AG04449 (cell line): ENCODE measurements at regions of chr15 and their contacts with region 1.

Region 1: DNA sequence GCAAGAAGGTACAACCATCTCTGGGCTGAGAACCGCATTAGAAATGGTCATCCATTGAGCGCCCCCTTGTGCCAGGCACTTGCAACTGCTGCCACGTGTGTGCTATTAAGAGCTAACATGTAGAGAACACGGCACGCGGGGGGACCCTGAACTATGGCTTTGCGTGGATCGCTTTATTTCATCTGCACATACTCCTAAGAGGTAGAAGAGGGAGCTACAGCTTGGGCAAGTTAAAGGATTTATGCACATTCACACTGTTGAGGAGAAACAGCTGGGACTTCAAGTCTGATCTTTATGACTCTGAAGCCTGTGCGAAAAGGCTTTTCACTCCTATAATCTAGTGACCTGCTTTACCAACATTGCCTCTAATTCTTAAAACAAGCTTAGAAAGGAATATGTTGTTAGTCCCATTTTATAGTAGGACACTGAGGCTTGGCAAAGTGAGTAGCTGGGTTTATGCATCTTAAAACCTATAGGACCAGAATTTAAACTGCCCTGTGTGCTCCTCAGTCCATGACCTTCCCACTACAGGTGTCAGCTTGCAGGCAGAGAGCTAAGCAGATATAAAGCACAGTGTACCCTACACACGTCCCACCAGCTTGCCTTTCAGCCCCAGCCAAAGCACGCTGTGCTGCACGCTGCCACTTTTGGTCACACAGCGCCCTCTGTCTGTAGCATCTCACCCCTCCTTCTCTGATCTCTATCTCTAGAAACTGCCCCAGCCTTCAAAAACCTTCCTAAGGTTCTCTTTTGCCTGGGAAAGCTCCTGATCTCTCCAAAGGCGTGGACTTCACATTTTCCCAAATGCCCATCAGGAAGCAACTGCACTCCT is 57.8 kb downstream of the STARD5 start:
- DNase-seq: no peak
- H3K4me3 ChIP-seq: peak overlapping the region; percentile 23
- CTCF ChIP-seq: peak; percentile 89

Region 2: DNA sequence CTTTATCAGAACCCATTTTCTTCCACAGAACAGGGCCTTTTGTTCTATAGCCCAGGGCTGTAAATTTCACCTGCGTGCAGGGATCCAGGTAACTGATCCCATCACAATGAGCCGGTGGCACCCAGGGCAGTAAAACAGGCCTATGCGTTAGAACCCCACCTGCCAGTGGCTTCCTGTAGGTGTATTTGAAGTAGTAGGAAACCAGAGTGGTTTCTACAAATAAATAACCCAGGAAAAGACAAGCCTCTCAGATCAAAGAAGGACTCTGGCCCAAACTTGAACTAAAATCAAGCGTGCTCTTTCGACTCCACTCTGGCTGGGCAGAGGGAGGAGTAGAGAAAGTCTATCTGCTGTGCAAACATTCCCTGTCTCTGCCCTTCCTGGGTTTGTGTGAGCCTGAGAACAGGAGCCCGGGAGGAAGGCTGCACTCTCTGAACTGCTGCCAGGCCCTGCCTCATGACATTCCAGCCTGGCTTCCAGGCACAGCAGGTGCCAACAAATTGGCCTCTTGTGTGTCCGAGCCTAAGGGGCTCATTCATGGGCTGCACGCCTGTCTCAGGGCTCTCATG is 409.3 kb before region 1 on chr15:
- CTCF ChIA-PET with region 1: no interaction called
- POLR2A ChIA-PET with region 1: no interaction called
- DNase-seq: no peak
- H3K4me3 ChIP-seq: no peak overlapping the region
- CTCF ChIP-seq: no peak

Region 3: DNA sequence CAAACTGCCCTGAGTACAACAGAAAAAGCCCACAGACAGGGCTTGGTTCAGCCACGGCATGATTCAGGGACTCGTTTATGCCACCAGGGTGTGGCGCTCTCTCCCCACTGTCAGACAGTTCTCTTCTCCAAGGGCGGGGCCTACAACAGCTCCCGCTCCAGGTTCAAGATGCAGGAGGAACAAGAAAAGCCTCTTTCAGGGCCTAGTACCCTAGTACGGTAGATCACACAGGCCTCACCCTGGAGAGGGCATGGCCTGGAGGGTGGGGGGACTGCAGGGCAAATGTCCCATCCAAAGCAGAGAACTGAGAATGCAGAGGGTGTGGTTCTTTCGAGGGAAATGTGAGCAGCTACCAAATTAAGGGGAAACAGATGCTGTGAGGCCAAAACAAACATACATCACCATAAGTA is 288.5 kb before region 1 on chr15:
- CTCF ChIA-PET with region 1: interaction called, 142 read pairs
- POLR2A ChIA-PET with region 1: no interaction called
- DNase-seq: no peak
- H3K4me3 ChIP-seq: no peak overlapping the region
- CTCF ChIP-seq: peak; percentile 62

Region 4: GRCh38 chr15:81049835-81050234 is 216.3 kb before region 1 on chr15:
- CTCF ChIA-PET with region 1: interaction called, 13 read pairs
- POLR2A ChIA-PET with region 1: no interaction called
- DNase-seq: no peak
- H3K4me3 ChIP-seq: no peak overlapping the region
- CTCF ChIP-seq: no peak

Region 5: GRCh38 chr15:81073801-81074200 is 192.4 kb before region 1 on chr15:
- CTCF ChIA-PET with region 1: no interaction called
- POLR2A ChIA-PET with region 1: no interaction called
- DNase-seq: no peak
- H3K4me3 ChIP-seq: no peak overlapping the region
- CTCF ChIP-seq: no peak

Region 6: GRCh38 chr15:81155375-81156218 is 110.6 kb before region 1 on chr15:
- CTCF ChIA-PET with region 1: interaction called, 733 read pairs
- POLR2A ChIA-PET with region 1: interaction called, 7 read pairs
- DNase-seq: no peak
- H3K4me3 ChIP-seq: no peak overlapping the region
- CTCF ChIP-seq: peak; percentile 31

Region 7: DNA sequence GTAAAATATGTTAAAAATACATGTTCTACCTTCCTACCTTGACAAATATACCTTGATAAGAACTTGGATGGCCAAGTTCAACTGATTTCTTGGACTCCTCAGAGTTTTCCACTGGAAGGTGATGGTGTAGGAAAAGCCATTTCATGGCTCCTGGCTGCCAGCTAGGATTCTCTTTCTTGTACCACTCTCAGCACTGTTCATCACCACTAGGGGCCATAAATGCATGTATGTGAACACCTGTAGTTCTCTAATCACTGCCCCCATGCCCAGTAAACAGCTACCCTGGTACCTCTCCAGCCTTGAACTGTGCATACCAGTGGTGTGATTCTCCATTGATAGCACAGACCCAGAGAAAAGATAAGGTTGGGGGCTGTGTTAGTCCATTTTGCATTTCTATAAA is 31.3 kb before region 1 on chr15:
- CTCF ChIA-PET with region 1: interaction called, 26 read pairs
- POLR2A ChIA-PET with region 1: no interaction called
- DNase-seq: no peak
- H3K4me3 ChIP-seq: no peak overlapping the region
- CTCF ChIP-seq: no peak

Region 8: DNA sequence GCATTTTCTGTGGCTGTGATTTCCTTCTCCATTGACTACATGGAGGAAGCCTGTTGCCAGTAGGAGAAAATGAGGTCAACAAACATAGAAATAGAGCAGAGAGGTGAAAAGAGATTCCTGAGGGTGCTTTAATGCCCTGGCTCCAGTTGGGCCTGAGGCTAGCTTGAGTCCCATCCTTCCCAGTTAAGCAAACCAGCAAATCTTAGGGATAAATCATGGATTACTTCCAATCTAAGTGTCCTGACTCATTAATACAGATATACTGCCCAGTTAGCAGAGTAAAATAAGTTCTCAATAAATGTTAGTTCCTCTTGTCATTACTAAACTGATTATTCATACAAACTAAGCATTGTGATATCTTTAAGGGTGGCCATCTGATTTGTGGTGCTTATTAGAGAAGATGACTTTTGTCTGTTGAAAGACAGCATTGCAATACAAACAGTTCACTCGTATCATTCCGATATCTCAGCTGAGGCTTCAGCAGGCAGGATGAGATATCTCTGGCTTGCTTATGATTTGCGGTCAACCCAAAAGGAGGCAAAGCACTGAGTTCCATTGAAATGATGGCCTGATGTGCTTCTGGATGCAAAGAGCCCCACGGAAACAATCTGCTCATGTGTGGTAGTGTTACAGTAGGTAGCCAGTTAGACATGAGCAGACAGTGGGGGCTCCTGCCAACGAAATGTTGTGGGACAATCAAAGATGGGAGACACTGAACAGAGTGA is 64.4 kb after region 1 on chr15:
- CTCF ChIA-PET with region 1: interaction called, 11 read pairs
- POLR2A ChIA-PET with region 1: no interaction called
- DNase-seq: no peak
- H3K4me3 ChIP-seq: no peak overlapping the region
- CTCF ChIP-seq: no peak